ENCODE measurements at regions of chr16 and their contacts with region 1.

Region 1: GRCh38 chr16:27179500-27180072 is 23.7 kb upstream of the KDM8 start:
- H3K4me3 Mint-ChIP-seq: no peak overlapping the region
- H3K27ac Mint-ChIP-seq: peak overlapping the region; percentile 9
- H3K4me1 Mint-ChIP-seq: peaks cover 17% of the 10 kb centered on the region
- H3K27me3 Mint-ChIP-seq: peaks cover 14% of the 10 kb centered on the region

Region 2: GRCh38 chr16:27073682-27074081 is 105.9 kb before region 1 on chr16:
- intact Hi-C with region 1: no loop called
- H3K4me3 Mint-ChIP-seq: no peak overlapping the region
- H3K27ac Mint-ChIP-seq: no peak overlapping the region
- H3K4me1 Mint-ChIP-seq: no peaks in the 10 kb centered on the region
- H3K27me3 Mint-ChIP-seq: peaks cover 9% of the 10 kb centered on the region

Region 3: DNA sequence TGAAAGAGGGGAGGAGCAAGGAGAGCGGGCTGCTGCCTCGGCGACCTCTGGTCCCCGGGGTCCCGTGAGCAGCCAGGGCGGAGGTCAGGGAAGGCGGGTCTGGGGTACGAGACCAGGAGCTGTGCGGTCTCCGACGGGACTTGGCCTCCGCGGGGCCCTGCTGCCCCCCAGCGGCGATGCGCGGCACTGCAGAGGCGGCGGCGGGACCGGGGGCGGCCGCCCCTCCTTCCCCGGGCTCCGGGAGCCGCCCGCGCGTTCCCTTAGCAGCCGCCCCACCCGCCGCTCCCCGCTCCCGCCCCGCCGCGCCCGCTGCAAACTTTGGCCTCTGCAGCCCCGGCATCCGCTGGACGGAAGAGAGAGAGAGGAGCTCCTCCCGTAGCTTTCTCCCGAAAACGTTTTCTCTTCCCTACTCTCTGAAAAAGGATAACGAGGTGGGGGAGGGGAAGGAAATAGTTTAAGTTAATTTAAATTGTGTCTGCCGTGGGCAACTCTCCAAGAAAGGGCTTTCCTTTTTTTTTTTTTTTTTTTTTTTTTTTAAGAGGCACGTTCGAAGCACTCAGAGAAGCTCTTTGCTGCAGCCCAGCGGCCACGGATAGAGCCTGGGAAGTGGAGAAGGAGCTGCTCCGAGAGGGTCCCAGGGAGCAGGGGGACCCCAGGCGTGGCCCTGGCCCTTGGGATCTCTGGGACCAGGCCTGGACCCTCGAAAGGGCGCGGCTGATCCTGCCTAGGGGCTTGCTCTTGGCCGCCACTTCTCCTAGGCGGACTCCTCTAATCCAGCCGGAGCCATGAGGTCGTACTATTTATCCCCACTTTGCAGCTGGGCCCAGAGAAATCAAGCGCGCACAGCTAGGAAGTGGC is 69.7 kb before region 1 on chr16:
- intact Hi-C with region 1: no loop called
- H3K4me3 Mint-ChIP-seq: peak overlapping the region; percentile 57
- H3K27ac Mint-ChIP-seq: no peak overlapping the region
- H3K4me1 Mint-ChIP-seq: peaks cover 17% of the 10 kb centered on the region
- H3K27me3 Mint-ChIP-seq: peaks cover 29% of the 10 kb centered on the region

Region 4: DNA sequence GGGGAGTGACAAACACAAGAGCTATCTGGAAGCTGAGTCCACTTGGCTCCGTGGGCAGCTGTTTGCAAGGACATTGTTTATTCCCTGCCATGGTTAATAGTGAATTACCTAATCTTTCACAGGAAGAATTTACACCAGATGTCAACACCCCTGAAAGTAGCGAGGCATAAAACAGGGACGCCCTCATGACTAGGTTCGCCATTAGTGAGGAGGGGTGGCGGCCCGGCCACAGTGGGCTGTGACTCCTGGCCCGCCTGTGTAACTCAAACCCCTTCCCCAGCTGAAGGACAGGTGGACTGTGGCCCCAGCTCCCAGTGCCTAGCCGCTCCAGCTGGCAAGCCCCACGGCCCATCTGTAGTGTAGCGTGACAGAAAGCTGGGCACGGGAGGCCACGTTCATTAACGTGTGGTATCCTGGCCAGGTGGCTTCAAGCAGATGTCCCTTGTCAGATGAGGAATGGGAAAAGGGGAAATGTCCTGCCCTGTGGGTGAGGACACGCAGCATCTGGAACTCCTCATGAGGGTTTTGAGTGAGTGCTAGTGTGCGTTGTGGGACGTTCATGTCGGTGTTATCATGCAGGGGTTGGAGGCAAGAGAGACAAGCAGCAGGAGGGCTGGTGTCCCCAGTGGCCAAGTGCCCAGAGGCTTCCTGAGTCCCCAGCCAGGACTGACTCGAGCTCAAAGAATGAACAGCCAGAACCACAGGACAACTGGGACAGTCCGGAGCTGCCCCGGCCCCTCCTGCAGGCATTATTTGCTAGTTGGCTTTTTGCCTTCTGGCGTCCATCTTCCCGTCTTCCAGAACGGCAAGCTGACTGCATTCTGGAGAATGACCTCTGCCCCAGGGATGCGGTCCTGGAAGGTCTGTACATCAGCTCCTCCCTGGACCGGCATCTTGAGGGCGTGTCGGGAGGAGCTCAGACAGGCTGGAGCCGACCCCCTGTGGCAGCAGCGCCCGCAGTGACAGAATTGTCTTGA is 43.0 kb after region 1 on chr16:
- intact Hi-C with region 1: loop called (anchors 10 kb)
- H3K4me3 Mint-ChIP-seq: no peak overlapping the region
- H3K27ac Mint-ChIP-seq: no peak overlapping the region
- H3K4me1 Mint-ChIP-seq: no peaks in the 10 kb centered on the region
- H3K27me3 Mint-ChIP-seq: no peaks in the 10 kb centered on the region

Region 5: DNA sequence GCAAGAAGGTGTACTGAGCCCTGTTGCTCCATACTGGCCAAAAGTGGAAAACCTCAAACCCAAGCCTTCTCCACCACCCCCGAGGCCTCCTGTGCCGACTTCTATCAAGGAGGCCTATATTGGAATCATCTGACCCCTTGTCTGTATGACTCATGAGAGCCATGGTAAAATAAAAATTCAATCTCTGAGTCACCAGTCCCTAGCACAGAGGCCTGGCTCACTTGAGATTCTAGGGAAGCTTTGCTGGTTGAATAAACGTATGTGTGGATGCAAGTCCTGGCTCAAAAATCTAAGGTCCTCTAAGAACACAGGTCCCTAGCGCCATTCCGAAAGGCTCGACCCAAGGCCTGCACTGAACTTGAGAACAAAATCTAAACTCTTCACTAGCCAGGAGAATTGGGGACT is 73.9 kb after region 1 on chr16:
- intact Hi-C with region 1: no loop called
- H3K4me3 Mint-ChIP-seq: no peak overlapping the region
- H3K27ac Mint-ChIP-seq: no peak overlapping the region
- H3K4me1 Mint-ChIP-seq: peaks cover 24% of the 10 kb centered on the region
- H3K27me3 Mint-ChIP-seq: no peaks in the 10 kb centered on the region

Region 6: DNA sequence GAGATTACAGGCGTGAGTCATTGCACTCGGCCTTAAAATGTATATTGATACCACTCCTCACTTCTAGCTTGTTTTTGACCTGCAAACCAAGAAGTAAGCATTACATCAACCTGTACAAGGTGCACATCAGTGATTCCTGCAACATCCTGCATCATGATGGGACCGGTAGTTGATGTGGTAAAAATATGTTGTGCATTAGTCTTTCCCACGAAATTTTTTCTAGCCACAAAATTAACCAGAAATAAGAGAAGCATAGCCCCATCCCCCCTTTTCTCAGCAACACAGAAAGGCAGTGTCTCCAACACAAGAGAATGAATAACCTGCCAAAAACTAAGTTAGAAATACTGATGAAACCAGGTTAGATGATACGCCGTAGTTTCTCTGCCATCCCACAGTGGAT is 110.1 kb after region 1 on chr16:
- intact Hi-C with region 1: no loop called
- H3K4me3 Mint-ChIP-seq: no peak overlapping the region
- H3K27ac Mint-ChIP-seq: no peak overlapping the region
- H3K4me1 Mint-ChIP-seq: peaks cover 49% of the 10 kb centered on the region
- H3K27me3 Mint-ChIP-seq: no peaks in the 10 kb centered on the region

Region 7: DNA sequence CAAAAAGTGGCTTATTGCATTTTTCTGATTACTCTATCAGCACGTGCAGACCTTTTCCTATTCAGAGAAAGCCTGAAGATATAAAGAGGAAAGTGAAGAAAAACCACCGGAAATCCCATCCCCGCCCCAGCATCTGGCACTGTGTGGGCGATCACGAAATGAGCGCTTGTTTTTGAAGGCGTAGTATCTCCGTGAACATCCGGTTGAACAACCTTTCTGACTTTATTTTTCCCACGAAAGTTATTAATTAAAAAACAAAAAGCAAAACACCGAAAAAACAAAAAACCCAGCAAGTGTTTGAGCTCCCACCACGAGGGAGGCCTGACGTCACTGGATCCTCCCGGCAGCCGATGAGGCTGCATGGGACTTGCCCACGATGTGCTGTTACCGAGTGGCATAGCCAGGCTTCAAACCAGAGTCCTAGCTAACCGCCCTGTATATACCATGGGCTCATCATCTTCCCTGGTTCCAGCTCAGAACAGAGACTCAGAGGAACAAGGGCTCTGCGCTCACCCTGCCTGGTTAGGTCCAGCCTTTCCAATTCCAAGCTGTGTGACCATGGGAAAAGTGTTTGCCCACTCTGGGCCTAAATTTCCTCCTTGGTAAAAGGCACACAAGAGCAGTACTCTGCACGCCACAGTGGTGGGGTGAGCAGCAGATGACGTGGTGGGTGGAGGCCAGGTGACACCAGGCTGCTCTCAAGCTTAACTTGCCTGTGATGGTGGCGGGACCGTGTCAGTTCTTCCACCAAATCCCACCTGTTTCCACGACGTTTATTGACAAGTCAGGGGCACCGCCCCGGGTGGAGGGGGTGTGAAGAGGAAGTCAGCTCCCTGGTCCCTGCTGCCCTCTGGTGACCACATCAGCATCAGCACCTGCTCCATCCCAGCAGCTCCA is 188.1 kb after region 1 on chr16:
- intact Hi-C with region 1: loop called (anchors 1 kb)
- H3K4me3 Mint-ChIP-seq: peak overlapping the region; percentile 62
- H3K27ac Mint-ChIP-seq: peak overlapping the region; percentile 82
- H3K4me1 Mint-ChIP-seq: peaks cover 53% of the 10 kb centered on the region
- H3K27me3 Mint-ChIP-seq: no peaks in the 10 kb centered on the region

Region 8: DNA sequence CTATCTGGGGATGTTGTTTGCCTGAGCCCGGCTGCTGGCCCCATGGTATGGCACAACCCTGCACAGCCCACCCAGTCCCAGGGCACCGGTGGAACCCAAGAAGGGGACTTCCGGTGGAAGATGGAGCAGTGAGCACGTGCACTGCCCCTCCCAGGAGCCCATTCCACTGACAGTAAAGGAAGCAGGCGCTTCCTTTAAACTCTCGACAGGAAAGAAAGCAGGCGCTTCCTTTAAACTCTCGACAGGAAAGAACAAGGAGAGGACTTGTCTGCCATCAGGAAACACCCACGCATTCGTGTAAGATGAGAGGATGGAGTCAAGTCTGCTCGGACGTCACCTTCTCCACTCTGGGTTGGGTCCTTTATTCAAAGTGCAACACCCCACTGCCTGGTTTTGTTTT is 276.1 kb after region 1 on chr16:
- intact Hi-C with region 1: loop called (anchors 5 kb)
- H3K4me3 Mint-ChIP-seq: no peak overlapping the region
- H3K27ac Mint-ChIP-seq: no peak overlapping the region
- H3K4me1 Mint-ChIP-seq: peaks cover 35% of the 10 kb centered on the region
- H3K27me3 Mint-ChIP-seq: peaks cover 27% of the 10 kb centered on the region

Measured in dendritic cell treated with granulocyte-macrophage colony-stimulating factor and Interleukin-4, amounts not matched to agents 40 ng/mL and 50 ng/mL, for 4 days (primary cell).